H1 (cell line): ENCODE measurements at regions of chr9 and their contacts with region 1.

Region 1: DNA sequence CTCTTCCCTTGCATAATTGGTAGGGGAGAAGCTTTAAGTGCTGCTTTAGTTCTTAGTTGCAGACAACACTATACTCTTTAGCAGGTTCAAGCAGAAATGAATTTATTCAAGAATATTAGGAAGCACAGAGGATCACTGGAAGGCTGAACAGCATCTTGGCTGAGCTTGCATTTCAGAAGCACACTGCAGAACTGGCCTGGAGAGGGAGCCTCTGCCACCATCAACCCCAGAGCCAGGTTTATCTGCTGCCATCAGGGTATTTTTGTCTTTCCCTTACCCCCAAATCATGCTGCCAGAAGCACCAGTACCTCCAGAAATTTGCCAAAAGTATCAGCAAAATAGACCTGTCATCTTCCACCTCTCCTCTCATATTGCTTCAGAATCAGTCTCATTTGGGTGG is 440.7 kb downstream of the DMAC1 start:
- DNase-seq: no peak
- H3K4me3 ChIP-seq: no peak overlapping the region
- H3K27ac ChIP-seq: no peak overlapping the region
- H3K4me1 ChIP-seq: 0 out of 7 replicates have a peak, but pooled peaks cover 0 to 1% (median 0%) of the 10 kb centered on the region in 4 experiments
- H3K27me3 ChIP-seq: no peaks in the 10 kb centered on the region
- CTCF ChIP-seq: peak; percentile 33 to 54 (median 51)
- EP300 ChIP-seq: no peak
- POLR2A ChIP-seq: no peak
- RAD21 ChIP-seq: peak; percentile 39 to 49

Region 2: DNA sequence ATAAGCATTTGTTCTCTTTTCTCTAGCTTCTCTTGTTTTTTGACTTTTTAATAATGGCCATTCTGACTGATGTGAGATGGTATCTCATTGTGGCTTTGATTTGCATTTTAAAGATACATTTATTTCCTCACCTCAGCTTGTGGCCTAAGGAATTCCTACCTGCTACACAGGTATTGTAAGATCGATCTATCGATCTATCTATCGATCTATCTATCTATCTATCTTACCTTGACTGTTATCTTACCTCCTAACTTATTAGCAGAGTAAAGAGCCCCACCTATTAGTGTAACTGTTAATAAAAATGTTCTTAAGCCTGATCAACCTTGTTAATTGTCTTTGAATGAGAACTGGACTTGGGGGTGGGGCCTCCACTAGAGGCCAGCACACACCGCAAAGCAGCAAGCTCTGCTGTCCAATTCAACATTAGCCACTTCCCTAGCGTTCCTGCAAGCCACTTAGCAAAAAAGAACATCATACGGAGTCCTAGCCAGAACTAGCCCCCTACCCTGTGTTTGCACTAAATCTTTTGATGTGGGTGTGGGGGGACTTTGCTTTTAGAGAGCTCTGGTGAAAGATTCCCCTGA is 85.4 kb before region 1 on chr9:
- CTCF ChIA-PET with region 1: interaction called, 13 read pairs
- POLR2A ChIA-PET with region 1: no interaction called
- DNase-seq: no peak
- H3K4me3 ChIP-seq: no peak overlapping the region
- H3K27ac ChIP-seq: no peak overlapping the region
- H3K4me1 ChIP-seq: no peaks in the 10 kb centered on the region
- H3K27me3 ChIP-seq: no peaks in the 10 kb centered on the region
- CTCF ChIP-seq: peak; percentile 52 to 57 (median 55)
- EP300 ChIP-seq: no peak
- POLR2A ChIP-seq: no peak
- RAD21 ChIP-seq: peak; percentile 68 to 72

Region 3: DNA sequence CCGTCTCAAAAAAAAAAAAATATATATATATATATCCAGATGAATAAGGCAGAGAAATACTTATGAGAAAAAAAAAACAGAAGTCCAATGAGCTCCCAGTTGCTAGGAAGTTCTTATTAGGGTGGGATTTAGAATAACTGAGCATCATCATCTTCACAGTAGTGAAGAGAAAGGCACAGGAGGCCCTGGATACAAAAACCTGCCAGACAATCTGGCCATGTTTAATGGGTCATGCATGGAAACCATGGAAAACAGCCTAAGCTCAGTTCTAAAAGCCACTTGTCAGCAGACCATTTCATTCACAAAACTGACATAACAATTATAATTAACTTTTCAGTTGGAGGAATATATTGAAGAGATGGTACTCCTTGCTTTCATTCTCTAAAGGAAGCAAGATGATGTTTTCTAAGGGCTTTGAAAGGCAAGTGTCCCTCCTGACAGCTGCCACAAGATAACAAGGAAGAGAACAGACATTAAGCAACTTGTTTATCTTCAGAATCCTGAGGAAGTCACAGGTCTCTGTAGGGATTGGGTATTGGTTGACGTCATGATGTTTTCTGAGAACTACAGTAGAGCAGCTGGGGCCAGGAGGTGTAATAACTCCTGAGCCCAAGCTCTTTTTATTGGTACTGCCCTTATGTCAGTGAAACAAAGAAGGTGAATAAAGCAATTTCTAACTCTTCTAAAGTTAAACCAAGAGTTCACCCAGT is 22.4 kb before region 1 on chr9:
- CTCF ChIA-PET with region 1: interaction called, 22 read pairs
- POLR2A ChIA-PET with region 1: no interaction called
- DNase-seq: no peak
- H3K4me3 ChIP-seq: no peak overlapping the region
- H3K27ac ChIP-seq: no peak overlapping the region
- H3K4me1 ChIP-seq: no peaks in the 10 kb centered on the region
- H3K27me3 ChIP-seq: no peaks in the 10 kb centered on the region
- CTCF ChIP-seq: no peak
- EP300 ChIP-seq: no peak
- POLR2A ChIP-seq: no peak
- RAD21 ChIP-seq: no peak

Region 4: DNA sequence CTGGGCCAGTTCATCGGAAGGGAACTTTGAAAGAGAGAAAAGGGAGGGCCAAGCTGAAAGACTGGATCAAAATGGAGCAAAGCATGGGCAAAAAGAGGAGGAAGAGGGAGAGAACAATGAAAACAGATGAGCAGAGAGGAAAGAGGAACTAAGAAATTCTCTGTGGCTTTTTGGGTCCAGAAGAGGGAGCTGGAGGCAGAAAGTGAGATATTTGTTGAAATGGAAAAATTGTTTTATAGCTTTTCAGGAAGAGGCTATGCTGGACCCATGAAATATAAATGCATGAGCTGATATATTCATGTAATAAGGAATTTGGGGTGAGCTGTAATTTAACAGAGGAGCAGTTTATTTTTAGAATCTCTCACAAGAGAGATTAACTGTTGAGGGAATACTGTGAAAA is 16.6 kb before region 1 on chr9:
- CTCF ChIA-PET with region 1: interaction called, 58 read pairs
- POLR2A ChIA-PET with region 1: no interaction called
- DNase-seq: no peak
- H3K4me3 ChIP-seq: no peak overlapping the region
- H3K27ac ChIP-seq: no peak overlapping the region
- H3K4me1 ChIP-seq: no peaks in the 10 kb centered on the region
- H3K27me3 ChIP-seq: no peaks in the 10 kb centered on the region
- CTCF ChIP-seq: no peak
- EP300 ChIP-seq: no peak
- POLR2A ChIP-seq: no peak
- RAD21 ChIP-seq: no peak

Region 5: DNA sequence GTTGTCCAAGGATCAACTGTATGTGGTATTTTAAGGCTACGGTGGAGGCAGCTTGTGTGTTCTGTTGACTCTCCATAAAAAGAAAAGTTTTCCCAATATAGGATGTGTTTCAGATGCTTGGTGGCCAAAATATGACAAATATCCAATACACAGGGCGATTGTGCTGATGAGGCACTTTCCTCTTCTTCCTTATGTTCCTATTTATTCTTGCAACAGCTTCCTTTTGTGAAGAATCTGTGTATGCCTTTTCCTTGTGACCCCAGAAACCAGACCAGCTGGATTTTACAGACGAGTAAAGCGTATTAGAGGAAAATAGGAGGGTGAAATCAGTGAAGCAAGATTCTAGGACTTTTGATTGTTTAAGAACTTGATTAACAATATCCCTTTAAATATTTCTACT is 11.3 kb before region 1 on chr9:
- CTCF ChIA-PET with region 1: interaction called, 58 read pairs
- POLR2A ChIA-PET with region 1: no interaction called
- DNase-seq: no peak
- H3K4me3 ChIP-seq: no peak overlapping the region
- H3K27ac ChIP-seq: no peak overlapping the region
- H3K4me1 ChIP-seq: no peaks in the 10 kb centered on the region
- H3K27me3 ChIP-seq: no peaks in the 10 kb centered on the region
- CTCF ChIP-seq: no peak
- EP300 ChIP-seq: no peak
- POLR2A ChIP-seq: no peak
- RAD21 ChIP-seq: no peak

Region 6: DNA sequence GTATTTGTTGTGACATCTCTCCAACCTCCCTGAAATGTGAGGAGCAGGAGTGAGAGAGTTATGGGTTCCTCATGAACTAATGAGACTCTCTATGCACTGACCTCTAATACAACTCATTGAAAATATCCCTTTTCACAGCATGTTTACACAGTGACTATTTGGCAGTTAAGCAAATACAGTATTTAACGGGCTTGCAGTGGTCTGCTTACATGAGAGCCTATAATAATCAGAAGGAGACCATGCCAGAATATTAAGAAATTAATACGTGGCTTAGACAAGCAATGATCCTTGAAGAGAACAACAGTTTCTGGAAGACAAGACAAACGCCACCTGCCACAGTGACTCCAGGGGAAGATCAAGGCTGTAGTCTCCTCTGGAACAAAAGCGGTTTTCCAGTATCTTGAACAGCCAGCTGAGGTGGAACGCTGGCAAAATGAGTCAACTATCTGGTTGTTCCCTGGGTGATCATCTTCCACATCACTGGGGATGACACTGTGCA is 16.2 kb after region 1 on chr9:
- CTCF ChIA-PET with region 1: interaction called, 24 read pairs
- POLR2A ChIA-PET with region 1: no interaction called
- DNase-seq: no peak
- H3K4me3 ChIP-seq: no peak overlapping the region
- H3K27ac ChIP-seq: no peak overlapping the region
- H3K4me1 ChIP-seq: no peaks in the 10 kb centered on the region
- H3K27me3 ChIP-seq: no peaks in the 10 kb centered on the region
- CTCF ChIP-seq: no peak
- EP300 ChIP-seq: no peak
- POLR2A ChIP-seq: no peak
- RAD21 ChIP-seq: no peak

Region 7: GRCh38 chr9:7394007-7394774 is 35.3 kb after region 1 on chr9:
- CTCF ChIA-PET with region 1: interaction called, 10 read pairs
- POLR2A ChIA-PET with region 1: no interaction called
- DNase-seq: no peak
- H3K4me3 ChIP-seq: no peak overlapping the region
- H3K27ac ChIP-seq: no peak overlapping the region
- H3K4me1 ChIP-seq: no peaks in the 10 kb centered on the region
- H3K27me3 ChIP-seq: peaks cover 0 to 2% (median 0%) of the 10 kb centered on the region in 4 experiments; a peak in 1 of 7 replicates
- CTCF ChIP-seq: peak; percentile 5 to 45 (median 16); a peak in 3 of 4 replicates
- EP300 ChIP-seq: no peak
- POLR2A ChIP-seq: no peak
- RAD21 ChIP-seq: peak in 1 of 2 experiments; percentile 34; a peak in 2 of 4 replicates